ENCODE measurements at regions of chr5 and their contacts with region 1.

Region 1: GRCh38 chr5:140481758-140482157 is 65.7 kb upstream of the EIF4EBP3 start:
- DNase-seq: peak; percentile 83
- ATAC-seq: peak; percentile 79
- H3K4me3 ChIP-seq: no peak overlapping the region
- H3K27ac ChIP-seq: no peak overlapping the region
- H3K4me1 ChIP-seq: no peaks in the 10 kb centered on the region
- H3K27me3 ChIP-seq: no peaks in the 10 kb centered on the region
- CTCF ChIP-seq: no peak
- POLR2A ChIP-seq: no peak
- RAD21 ChIP-seq: no peak

Region 2: DNA sequence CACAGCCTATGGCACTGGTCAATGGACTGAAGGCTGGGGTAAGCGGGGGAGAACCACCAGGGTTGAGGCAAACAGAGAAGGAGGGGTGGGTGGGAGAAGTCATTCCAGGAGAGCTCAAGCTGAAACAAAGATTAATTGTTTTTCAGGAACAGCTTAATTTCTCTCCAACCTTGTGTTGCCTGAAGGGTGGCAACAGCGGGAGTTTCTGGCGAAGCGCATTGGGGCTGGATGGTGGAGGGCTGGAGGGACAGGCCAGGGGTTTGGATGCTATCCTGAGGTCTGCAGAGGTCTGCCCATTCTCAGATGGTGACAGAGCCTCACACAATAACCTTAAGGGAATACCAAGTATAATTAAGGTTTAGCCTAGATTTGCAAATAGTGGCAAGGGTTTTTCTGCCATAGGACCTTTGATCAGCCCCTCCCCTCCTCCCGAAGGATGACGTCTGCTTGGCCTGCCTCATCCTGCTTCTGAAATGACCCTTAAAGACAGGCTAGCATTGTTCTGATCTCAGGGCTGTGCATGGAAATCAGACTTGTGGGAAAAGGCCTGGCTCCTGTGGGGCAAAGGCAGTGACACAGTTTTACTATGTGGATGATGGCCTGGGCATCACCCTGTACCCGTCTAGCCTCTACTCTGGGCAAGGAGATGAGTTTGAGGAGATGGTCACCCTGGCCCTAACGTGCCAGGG is 653.4 kb before region 1 on chr5:
- CTCF ChIA-PET with region 1: no interaction called
- POLR2A ChIA-PET with region 1: no interaction called
- dilution Hi-C with region 1: no loop called
- in situ Hi-C with region 1: no loop called
- intact Hi-C with region 1: no loop called
- DNase-seq: no peak
- ATAC-seq: no peak
- H3K4me3 ChIP-seq: no peak overlapping the region
- H3K27ac ChIP-seq: no peak overlapping the region
- H3K4me1 ChIP-seq: no peaks in the 10 kb centered on the region
- H3K27me3 ChIP-seq: peaks cover 39% of the 10 kb centered on the region
- CTCF ChIP-seq: no peak
- POLR2A ChIP-seq: no peak
- RAD21 ChIP-seq: no peak

Region 3: GRCh38 chr5:140497897-140498296 is 16.1 kb after region 1 on chr5:
- CTCF ChIA-PET with region 1: no interaction called
- POLR2A ChIA-PET with region 1: no interaction called
- dilution Hi-C with region 1: no loop called
- in situ Hi-C with region 1: no loop called
- intact Hi-C with region 1: loop called (anchors 2 kb)
- DNase-seq: no peak
- ATAC-seq: no peak
- H3K4me3 ChIP-seq: no peak overlapping the region
- H3K27ac ChIP-seq: no peak overlapping the region
- H3K4me1 ChIP-seq: no peaks in the 10 kb centered on the region
- H3K27me3 ChIP-seq: no peaks in the 10 kb centered on the region
- CTCF ChIP-seq: no peak
- POLR2A ChIP-seq: no peak
- RAD21 ChIP-seq: no peak

Measured in IMR-90 (cell line).